ENCODE measurements at regions of chr2 and their contacts with region 1.

Region 1: DNA sequence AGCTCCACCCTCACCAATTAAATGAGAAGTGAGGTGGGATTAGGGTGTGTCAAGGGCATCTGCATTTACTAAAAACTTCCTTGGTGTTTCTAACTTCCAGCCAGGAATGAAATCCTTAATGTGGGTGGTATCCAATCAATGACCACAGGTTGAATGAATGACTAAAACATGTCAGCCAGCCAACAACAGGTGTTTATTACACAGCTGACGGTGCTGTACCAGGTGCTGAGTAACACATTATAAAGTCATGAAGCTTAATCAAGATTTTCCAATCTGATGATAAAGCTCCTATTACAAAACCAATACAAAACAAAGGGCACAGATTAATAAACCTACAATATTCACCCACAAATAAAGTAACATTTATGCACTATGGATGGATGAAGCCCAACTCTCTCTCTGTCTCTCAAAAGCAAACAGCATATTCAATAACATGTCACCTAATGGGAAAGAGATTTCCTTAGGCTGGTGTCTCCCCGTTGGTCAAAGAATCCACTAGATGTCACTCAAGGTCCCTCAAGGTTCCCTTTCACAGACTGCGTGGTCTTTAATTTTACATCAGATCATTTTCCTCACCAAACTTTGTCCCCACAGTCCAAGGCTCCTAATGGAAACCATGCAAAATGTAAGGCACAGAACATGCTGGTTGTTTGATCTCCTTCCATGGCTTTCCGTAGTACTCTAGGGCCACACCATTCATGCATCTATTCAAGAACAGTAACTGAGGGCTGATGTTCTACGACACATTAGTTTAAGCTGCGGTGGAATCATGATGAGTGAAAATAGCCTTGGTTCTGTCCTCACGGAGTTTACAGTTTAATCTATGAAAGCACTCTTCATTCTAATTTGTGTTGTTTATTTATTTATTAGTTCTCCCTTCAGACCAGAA is 6.4 kb upstream of the PTPN4 start:
- DNase-seq: no peak
- ATAC-seq: peak; percentile 80

Region 2: DNA sequence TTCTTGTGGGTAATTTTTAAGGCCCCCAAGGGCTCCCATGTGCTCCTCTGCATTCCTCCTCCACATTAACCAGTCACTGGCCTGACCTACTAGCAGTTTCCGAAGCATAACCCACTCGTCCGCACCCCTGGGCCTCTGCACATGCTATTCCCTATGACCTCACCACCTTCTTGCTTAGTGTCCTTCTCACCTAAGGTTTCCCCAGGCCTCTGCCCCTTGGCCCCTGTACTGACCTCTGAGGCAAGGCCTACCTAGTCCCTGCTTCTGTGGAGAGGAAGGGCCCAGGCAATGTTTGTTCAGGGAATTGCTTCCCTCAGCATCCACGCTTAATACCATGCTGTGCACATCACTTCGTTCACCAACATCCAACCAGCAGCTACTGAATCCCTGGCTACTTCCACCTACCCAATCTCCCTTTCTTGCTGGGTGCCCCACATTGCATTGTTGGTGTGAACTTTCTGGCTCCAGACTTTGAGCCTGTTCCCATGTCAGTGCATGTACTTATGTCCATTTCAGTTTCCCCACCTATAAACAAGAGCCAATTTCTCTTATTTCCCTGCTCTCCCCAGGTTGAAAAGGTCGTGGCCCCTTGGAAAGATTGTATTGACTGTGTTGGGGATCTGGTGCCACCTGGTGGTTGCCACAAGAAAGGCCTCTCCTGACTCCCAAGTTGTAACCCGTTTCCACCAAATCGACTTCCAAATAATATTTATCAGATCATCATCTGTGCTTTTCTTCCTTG is 93.5 kb before region 1 on chr2:
- intact Hi-C with region 1: no loop called
- DNase-seq: no peak
- ATAC-seq: peak; percentile 53

Region 3: DNA sequence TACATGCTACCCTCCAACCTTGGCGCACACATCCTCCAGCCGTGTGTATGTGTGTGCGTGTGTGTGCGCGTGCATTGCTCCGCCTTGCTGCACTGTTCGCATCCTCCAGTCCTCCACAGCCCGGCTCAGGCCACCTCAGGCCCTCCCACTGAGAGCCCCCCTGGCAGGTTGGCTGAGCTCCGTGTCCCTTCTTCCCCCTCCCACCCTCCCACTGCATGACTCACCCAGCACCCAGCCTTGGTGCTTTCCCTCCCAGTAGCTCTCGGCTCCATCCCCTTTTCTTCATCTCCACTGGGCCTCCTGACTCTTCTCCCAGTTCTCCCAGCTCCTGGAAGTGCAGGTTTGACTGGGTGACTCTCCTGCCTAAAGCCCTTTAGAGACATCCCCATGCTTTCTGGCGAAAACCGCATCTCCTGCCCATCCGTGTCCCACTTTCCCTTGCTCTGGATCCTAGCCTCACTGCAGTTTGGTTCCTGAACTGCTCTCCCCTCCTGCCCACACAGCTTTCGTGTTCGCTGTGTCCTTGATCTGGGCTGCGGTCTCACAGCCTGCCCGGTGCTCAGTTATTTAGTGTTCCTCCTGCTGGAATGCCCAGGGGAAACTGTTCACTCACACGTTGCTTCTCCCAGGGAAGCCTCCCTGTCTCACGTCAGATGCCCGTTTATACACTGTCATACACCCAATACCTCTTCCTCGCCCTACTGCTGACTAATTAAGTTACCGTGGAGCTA is 69.4 kb before region 1 on chr2:
- intact Hi-C with region 1: no loop called
- DNase-seq: no peak
- ATAC-seq: no peak

Region 4: GRCh38 chr2:119826370-119826961 is 73.2 kb after region 1 on chr2:
- intact Hi-C with region 1: loop called in 1 of 2 experiments (anchors 5 kb)
- DNase-seq: no peak
- ATAC-seq: peak; percentile 73

Measured in left colon (tissue), 2 donors.